ENCODE measurements at regions of chr6 and their contacts with region 1.

Region 1: GRCh38 chr6:137008204-137008603 is 36.6 kb downstream of the IL20RA start:
- DNase-seq: no peak
- ATAC-seq: no peak

Region 2: GRCh38 chr6:136840276-136841001 is 167.8 kb before region 1 on chr6:
- intact Hi-C with region 1: loop called in 1 of 2 experiments (anchors 5 kb)
- DNase-seq: no peak
- ATAC-seq: no peak

Region 3: GRCh38 chr6:136967876-136968752 is 40.1 kb before region 1 on chr6:
- intact Hi-C with region 1: loop called in 1 of 2 experiments (anchors 5 kb)
- DNase-seq: peak; percentile 66
- ATAC-seq: peak; percentile 70 to 85

Region 4: DNA sequence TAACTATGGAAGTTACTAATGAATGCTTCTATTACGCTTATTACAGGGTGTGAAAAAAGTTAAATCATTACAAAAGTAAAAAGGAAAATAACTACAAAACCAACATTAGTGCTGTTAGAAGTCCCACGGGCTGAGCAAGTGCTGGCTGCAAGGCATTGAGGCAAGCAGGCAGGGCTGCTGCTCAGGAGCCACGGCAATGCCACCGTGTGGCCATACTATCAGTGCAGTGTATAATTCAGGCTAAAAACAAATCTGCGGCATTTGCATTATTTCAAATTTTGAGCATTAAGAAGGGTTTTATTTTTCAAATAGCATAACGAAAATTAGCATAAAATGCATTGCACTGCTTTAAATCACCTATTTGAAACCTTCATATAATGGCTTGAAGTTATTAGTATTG is 193.9 kb after region 1 on chr6:
- intact Hi-C with region 1: no loop called
- DNase-seq: no peak
- ATAC-seq: peak; percentile 70 to 89

Measured in left cardiac atrium (tissue), 4 donors.